ENCODE measurements at regions of chrX and their contacts with region 1.

Region 1: DNA sequence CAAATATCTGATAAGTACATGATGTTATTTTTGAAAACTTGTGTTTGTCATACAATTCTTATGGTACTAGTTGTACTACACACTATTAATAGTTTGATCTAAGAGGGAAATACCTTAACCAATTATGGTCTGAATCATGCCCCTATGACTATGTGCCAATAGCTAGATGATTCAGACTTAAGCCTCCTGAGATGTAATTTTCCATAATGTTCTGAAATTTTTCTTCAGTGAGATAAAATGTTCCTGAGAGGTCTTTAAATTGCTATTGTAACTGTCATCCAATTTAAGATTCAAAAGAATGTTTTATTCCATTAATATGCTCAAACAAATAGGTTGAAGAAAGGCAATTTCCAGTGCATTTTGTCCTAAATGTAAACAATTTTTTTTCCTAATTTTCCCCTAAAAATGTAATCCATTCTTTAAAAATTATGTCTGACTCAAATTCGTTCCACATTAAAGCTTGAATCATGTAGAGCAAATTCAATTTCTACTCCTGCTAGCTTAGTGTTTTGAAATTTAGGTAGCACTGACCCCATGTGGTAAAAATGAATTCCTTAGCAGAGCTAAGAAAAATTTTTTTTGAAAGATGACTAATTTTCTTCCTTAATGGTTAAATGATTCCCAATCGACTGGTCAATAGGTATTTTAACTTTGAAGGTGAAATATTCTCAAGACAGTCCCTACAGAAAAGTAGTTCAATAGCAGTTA is 49.1 kb downstream of the APOOL start:
- DNase-seq: no peak
- ATAC-seq: no peak
- H3K4me3 Mint-ChIP-seq: no peak overlapping the region
- H3K27ac Mint-ChIP-seq: no peak overlapping the region
- H3K4me1 Mint-ChIP-seq: no peaks in the 10 kb centered on the region
- H3K27me3 Mint-ChIP-seq: no peaks in the 10 kb centered on the region

Region 2: DNA sequence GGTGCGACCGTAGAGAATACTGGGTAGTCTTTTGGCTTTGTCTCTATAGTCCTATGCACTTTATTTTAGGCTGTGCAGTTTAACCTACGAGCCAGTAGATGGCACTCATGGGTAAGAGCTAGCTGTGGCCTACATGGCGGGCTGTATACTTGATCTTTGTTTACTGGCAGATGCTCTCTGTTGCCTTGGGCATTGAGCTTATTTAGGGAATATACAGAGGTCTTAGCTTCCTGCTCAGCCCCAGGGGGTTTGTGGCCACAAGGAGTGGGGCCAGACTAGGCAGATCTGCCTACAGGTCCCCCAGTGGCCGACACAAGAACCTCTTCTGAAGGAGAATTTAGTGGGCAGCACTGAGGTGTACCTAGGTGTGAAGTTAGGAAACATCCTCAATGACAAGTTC is 323.0 kb before region 1 on chrX:
- CTCF ChIA-PET with region 1: interaction called, 10 read pairs
- POLR2A ChIA-PET with region 1: no interaction called
- DNase-seq: peak; percentile 20
- ATAC-seq: peak; percentile 63
- H3K4me3 Mint-ChIP-seq: no peak overlapping the region
- H3K27ac Mint-ChIP-seq: no peak overlapping the region
- H3K4me1 Mint-ChIP-seq: no peaks in the 10 kb centered on the region
- H3K27me3 Mint-ChIP-seq: no peaks in the 10 kb centered on the region

Region 3: DNA sequence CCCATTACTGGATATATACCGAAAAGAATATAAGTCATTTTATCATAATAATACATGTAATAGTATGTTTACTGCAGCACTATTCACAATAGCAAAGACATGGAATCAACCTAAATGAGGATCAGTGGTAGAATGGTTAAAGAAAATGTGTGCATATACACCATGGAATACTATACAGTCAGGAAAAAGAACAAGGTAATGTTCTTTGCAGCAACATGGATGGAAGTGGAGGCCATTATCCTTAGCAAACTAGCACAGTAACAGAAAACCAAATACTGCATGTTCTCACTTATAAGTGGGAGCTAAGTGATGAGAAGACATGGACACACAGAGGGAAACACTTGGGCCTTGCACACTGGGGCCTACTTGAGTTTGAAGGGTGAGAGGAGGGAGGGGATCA is 256.5 kb before region 1 on chrX:
- CTCF ChIA-PET with region 1: no interaction called
- POLR2A ChIA-PET with region 1: no interaction called
- DNase-seq: no peak
- ATAC-seq: no peak
- H3K4me3 Mint-ChIP-seq: no peak overlapping the region
- H3K27ac Mint-ChIP-seq: no peak overlapping the region
- H3K4me1 Mint-ChIP-seq: no peaks in the 10 kb centered on the region
- H3K27me3 Mint-ChIP-seq: no peaks in the 10 kb centered on the region

Measured in activated CD8-positive, alpha-beta T cell treated with anti-CD3 and anti-CD28 coated beads, Interleukin-2, amount 10 ng/mL, durations not matched to agents 7 days and 5 days (primary cell).